Heart left ventricle (tissue), 16 donors: ENCODE measurements at regions of chr12 and their contacts with region 1.

Region 1: GRCh38 chr12:116609319-116610114 is 50.3 kb downstream of the MAP1LC3B2 start:
- DNase-seq: no peak
- ATAC-seq: peak in 1 of 4 donors; percentile 10
- H3K4me3 ChIP-seq: no peak overlapping the region
- H3K27ac ChIP-seq: peak overlapping the region in 7 of 12 donors; percentile 5 to 44 (median 21)
- H3K4me1 ChIP-seq: peaks cover 0 to 27% (median 12%) of the 10 kb centered on the region in 12 donors
- H3K27me3 ChIP-seq: peaks cover 0 to 2% (median 0%) of the 10 kb centered on the region in 9 donors
- CTCF ChIP-seq: peak in 8 of 12 donors; percentile 18 to 44 (median 32)
- POLR2A ChIP-seq: no peak

Region 2: DNA sequence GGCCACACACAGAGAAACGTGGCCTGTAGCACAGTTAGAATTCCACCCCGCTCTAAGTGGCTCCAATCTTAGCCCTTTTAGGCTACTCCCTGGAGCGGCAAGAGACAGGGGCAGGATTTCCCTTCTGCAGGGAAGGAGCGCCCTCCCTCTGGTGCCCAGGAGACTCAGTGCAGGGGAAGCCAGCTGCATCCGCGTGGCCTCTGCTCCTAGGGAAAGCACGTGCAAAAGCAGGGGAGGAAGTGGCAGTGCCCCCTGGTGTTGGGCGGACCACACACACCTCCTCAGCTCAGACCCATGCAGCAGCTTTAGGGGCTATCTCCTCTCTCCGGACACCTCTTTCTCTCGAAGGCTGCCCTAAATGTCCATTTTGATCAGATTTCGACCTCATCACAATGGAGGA is 78.4 kb after region 1 on chr12:
- intact Hi-C with region 1: loop called in 4 of 10 experiments (anchors 5 to 10 kb)
- DNase-seq: peak; percentile 47 to 76 (median 54)
- ATAC-seq: peak in 3 of 4 donors; percentile 60 to 85 (median 76)
- H3K4me3 ChIP-seq: no peak overlapping the region
- H3K27ac ChIP-seq: peak overlapping the region in 1 of 12 donors; percentile 12
- H3K4me1 ChIP-seq: peaks cover 0 to 6% (median 1%) of the 10 kb centered on the region in 12 donors
- H3K27me3 ChIP-seq: peaks cover 0 to 25% (median 0%) of the 10 kb centered on the region in 9 donors
- CTCF ChIP-seq: peak; percentile 31 to 66 (median 46)
- POLR2A ChIP-seq: no peak